ENCODE measurements at regions of chr11 and their contacts with region 1.

Region 1: GRCh38 chr11:73931039-73931645 is 19.7 kb upstream of the DNAJB13 start:
- DNase-seq: peak; percentile 49 to 87
- ATAC-seq: peak; percentile 98 to 100
- H3K4me3 ChIP-seq: no peak overlapping the region
- H3K27ac ChIP-seq: no peak overlapping the region
- H3K4me1 ChIP-seq: no peaks in the 10 kb centered on the region
- CTCF ChIP-seq: peak; percentile 72
- EP300 ChIP-seq: no peak
- POLR2A ChIP-seq: no peak
- RAD21 ChIP-seq: peak; percentile 83 to 89

Region 2: DNA sequence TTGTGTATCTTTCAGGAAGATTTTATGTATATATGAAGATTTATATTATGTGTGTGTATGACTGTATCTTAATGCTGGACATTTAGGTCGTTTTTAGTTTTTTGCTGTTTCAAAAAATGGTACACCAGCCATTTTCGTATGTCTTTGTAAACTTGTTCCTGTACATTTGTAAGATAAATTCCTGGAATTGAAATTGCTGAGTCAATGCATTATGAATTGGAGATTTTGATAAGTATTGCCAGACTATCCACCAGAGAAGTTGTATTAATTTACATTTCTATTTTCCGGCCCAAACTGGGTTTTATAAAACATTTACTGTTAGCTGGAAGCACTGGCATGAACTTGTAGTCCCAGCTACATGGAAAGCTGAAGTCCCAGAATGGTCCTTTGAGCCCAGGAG is 118.9 kb before region 1 on chr11:
- CTCF ChIA-PET with region 1: no interaction called
- POLR2A ChIA-PET with region 1: no interaction called
- DNase-seq: no peak
- ATAC-seq: no peak
- H3K4me3 ChIP-seq: no peak overlapping the region
- H3K27ac ChIP-seq: no peak overlapping the region
- H3K4me1 ChIP-seq: no peaks in the 10 kb centered on the region
- CTCF ChIP-seq: no peak
- EP300 ChIP-seq: no peak
- POLR2A ChIP-seq: no peak
- RAD21 ChIP-seq: no peak

Region 3: GRCh38 chr11:73907191-73907590 is 24.0 kb before region 1 on chr11:
- CTCF ChIA-PET with region 1: interaction called, 19 read pairs
- POLR2A ChIA-PET with region 1: no interaction called
- DNase-seq: peak; percentile 49 to 75
- ATAC-seq: peak; percentile 99
- H3K4me3 ChIP-seq: no peak overlapping the region
- H3K27ac ChIP-seq: 0 out of 6 replicates have a peak overlapping the region, but pooled peaks of 1 of the 2 experiments have one; percentile 24
- H3K4me1 ChIP-seq: peaks cover 5% of the 10 kb centered on the region; the same call in 2 of the 3 replicates
- CTCF ChIP-seq: 0 out of 3 replicates have a peak, but pooled peaks have one; percentile 8
- EP300 ChIP-seq: no peak
- POLR2A ChIP-seq: no peak
- RAD21 ChIP-seq: 0 out of 5 replicates have a peak, but pooled peaks of 1 of the 2 experiments have one; percentile 6

Region 4: DNA sequence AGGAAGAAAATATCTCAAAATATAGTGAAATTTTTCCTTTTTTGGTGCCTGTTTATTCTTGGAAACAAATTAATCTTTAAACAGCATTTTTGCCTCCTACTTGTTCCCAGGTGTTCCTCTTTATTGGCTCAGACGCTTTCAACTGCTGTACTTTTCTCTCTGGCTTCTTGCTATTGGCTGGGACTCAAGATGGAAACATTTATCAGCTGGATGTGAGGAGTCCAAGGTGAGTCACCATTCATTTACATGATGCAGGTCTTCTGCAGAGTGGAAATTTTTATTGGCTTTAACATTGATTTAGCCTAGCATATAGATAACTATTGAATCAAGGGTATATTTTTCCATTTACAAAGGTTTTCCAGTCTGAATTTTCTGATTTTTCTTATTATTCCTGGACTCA is 14.7 kb before region 1 on chr11:
- CTCF ChIA-PET with region 1: interaction called, 11 read pairs
- POLR2A ChIA-PET with region 1: no interaction called
- DNase-seq: no peak
- ATAC-seq: no peak
- H3K4me3 ChIP-seq: no peak overlapping the region
- H3K27ac ChIP-seq: no peak overlapping the region
- H3K4me1 ChIP-seq: no peaks in the 10 kb centered on the region
- CTCF ChIP-seq: no peak
- EP300 ChIP-seq: no peak
- POLR2A ChIP-seq: no peak
- RAD21 ChIP-seq: no peak

Region 5: GRCh38 chr11:73957654-73958361 is 26.7 kb after region 1 on chr11:
- CTCF ChIA-PET with region 1: no interaction called
- POLR2A ChIA-PET with region 1: no interaction called
- DNase-seq: no peak
- ATAC-seq: peak in 1 of 2 experiments; percentile 35; a peak in 1 of 6 replicates
- H3K4me3 ChIP-seq: no peak overlapping the region
- H3K27ac ChIP-seq: peak overlapping the region in 1 of 2 experiments; percentile 70; a peak in 2 of 6 replicates
- H3K4me1 ChIP-seq: peaks cover 18% of the 10 kb centered on the region
- CTCF ChIP-seq: no peak
- EP300 ChIP-seq: no peak
- POLR2A ChIP-seq: no peak
- RAD21 ChIP-seq: no peak

Region 6: DNA sequence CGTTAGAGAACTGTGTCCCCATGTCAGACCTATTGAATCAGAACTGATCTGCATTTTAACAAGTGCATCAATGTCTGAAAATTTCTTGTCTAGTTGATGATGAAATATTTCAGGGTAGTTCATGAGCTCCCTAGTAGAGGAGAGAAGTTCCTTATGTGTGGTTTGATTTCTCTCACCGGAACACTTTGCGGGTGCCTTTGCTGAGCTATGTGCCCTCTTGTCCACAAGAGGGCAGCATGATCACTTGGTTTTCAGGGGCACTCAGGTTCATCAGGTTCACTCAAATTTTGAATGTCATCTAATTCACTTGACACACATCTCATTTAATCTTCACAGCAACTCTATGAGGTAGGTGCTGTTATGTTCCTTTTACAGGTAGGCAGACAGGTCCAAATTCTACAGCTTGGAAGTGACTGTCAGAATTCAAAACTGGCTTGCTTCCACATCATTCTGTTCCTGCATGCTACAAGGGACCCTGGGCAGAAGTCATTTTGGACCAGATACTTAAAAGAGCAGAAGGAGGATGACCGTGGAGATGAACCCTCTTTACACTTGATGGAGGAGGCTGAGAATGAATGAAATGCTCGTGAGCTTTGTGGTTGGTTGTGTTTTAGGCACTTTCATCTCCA is 324.7 kb after region 1 on chr11:
- CTCF ChIA-PET with region 1: no interaction called
- POLR2A ChIA-PET with region 1: no interaction called
- DNase-seq: peak; percentile 73 to 74
- ATAC-seq: peak; percentile 60 to 66; a peak in 4 of 6 replicates
- H3K4me3 ChIP-seq: no peak overlapping the region
- H3K27ac ChIP-seq: peak overlapping the region; percentile 69 to 83
- H3K4me1 ChIP-seq: peaks cover 53% of the 10 kb centered on the region
- CTCF ChIP-seq: peak; percentile 96
- EP300 ChIP-seq: no peak
- POLR2A ChIP-seq: no peak
- RAD21 ChIP-seq: peak; percentile 97

Measured in A549 (cell line).